IMR-90 (cell line): ENCODE measurements at regions of chr3 and their contacts with region 1.

Region 1: DNA sequence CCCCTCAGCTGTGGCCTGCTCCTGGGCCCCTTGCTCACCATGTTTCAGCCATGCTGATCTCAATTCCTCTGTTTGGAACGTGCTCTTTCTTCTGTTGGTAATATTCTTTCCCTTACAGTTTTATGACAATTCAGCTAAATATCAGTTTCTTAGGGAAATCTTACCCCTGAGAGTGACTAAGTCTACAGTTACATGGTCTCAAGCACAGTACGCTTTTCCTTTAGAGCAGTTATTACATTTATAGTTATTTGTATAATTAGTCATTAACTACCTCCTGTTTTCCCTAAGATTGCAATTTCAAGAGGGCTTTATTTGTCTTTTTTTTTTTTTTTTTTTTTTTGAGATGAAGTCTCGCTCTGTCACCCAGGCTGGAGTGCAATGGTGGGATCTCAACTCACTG is 23.5 kb downstream of the C3orf62 start:
- DNase-seq: no peak
- ATAC-seq: no peak
- H3K4me3 ChIP-seq: no peak overlapping the region
- H3K27ac ChIP-seq: no peak overlapping the region
- H3K4me1 ChIP-seq: no peaks in the 10 kb centered on the region
- H3K27me3 ChIP-seq: no peaks in the 10 kb centered on the region
- CTCF ChIP-seq: no peak
- POLR2A ChIP-seq: no peak
- RAD21 ChIP-seq: no peak

Region 2: GRCh38 chr3:48240711-48241491 is 1012.6 kb before region 1 on chr3 and contains the start of gene ZNF589:
- CTCF ChIA-PET with region 1: no interaction called
- POLR2A ChIA-PET with region 1: interaction called, 13 read pairs
- dilution Hi-C with region 1: no loop called
- in situ Hi-C with region 1: no loop called
- intact Hi-C with region 1: no loop called
- DNase-seq: peak; percentile 79
- ATAC-seq: peak; percentile 96
- H3K4me3 ChIP-seq: peak within 1 kb of the TSS; percentile 84
- H3K27ac ChIP-seq: peak within 1 kb of the TSS; percentile 49; the same call in 1 of the 2 replicates
- H3K4me1 ChIP-seq: no peaks in the 10 kb centered on the region
- H3K27me3 ChIP-seq: no peaks in the 10 kb centered on the region; the same call in 1 of the 2 replicates
- CTCF ChIP-seq: peak; percentile 32
- POLR2A ChIP-seq: no peak; the same call in 1 of the 2 replicates
- RAD21 ChIP-seq: no peak
- total RNA-seq, gene ZNF589: 3.9 and 4.7 TPM in 2 replicates